ENCODE measurements at regions of chr7 and their contacts with region 1.

Region 1: DNA sequence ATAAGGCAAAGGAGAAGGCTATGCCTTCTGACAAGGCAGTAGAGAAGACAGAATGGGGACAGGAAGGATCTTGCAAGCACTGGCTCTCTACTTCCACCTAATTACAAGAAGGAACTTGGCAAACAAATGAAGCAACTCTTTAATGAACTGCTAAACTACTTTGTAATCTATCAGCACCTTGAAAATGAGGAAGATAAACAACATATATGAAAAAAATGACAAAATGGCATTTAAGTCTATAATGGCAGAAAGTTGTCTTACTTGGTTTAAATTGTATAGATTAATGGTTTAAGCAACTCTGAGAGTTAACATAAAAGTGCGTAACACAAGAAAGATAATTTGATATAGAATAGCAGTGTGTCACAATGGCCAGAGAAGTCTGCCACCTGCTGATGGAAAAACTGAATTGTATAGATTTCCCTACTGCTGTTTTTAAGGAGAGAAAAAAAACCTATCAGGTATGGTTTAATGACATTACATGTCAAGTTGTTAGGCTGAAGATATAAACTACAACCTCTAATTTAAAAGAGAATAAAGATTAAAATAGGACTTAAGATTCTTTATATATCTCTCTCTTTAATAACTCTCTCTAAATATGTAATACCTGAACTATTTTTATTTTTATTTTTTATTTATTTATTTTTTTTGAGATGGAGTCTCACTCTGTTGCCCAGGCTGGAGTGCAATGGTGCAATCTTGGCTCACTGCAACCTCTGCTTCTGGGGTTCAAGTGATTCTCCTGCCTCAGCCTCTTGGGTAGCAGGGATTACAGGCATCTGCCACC is 11.8 kb downstream of the NT5C3A start:
- DNase-seq: no peak
- H3K4me3 ChIP-seq: no peak overlapping the region
- H3K27ac ChIP-seq: no peak overlapping the region
- H3K4me1 ChIP-seq: no peaks in the 10 kb centered on the region
- H3K27me3 ChIP-seq: no peaks in the 10 kb centered on the region
- CTCF ChIP-seq: peak in 2 of 3 experiments; percentile 26 to 44; a peak in 2 of 4 replicates
- EP300 ChIP-seq: no peak
- POLR2A ChIP-seq: no peak
- RAD21 ChIP-seq: peak; percentile 48 to 55

Region 2: GRCh38 chr7:32802305-32802910 is 248.3 kb before region 1 on chr7:
- CTCF ChIA-PET with region 1: interaction called, 10 read pairs
- POLR2A ChIA-PET with region 1: no interaction called
- DNase-seq: no peak
- H3K4me3 ChIP-seq: no peak overlapping the region
- H3K27ac ChIP-seq: no peak overlapping the region
- H3K4me1 ChIP-seq: no peaks in the 10 kb centered on the region
- H3K27me3 ChIP-seq: no peaks in the 10 kb centered on the region
- CTCF ChIP-seq: no peak
- EP300 ChIP-seq: no peak
- POLR2A ChIP-seq: no peak
- RAD21 ChIP-seq: no peak

Region 3: GRCh38 chr7:33062782-33063443 is 12.2 kb after region 1 on chr7:
- CTCF ChIA-PET with region 1: interaction called, 5 read pairs
- POLR2A ChIA-PET with region 1: interaction called, 19 read pairs
- DNase-seq: peak; percentile 82 to 95
- H3K4me3 ChIP-seq: peak overlapping the region; percentile 80 to 90 (median 85)
- H3K27ac ChIP-seq: peak overlapping the region; percentile 74; the same call in 1 of the 2 replicates
- H3K4me1 ChIP-seq: peaks cover 0 to 7% (median 0%) of the 10 kb centered on the region in 4 experiments; a peak in 1 of 7 replicates
- H3K27me3 ChIP-seq: no peaks in the 10 kb centered on the region
- CTCF ChIP-seq: no peak
- EP300 ChIP-seq: no peak
- POLR2A ChIP-seq: peak; percentile 70 to 82
- RAD21 ChIP-seq: no peak